ENCODE measurements at regions of chr9 and their contacts with region 1.

Region 1: GRCh38 chr9:127074561-127075548 is 47.6 kb downstream of the ANGPTL2 start:
- DNase-seq: peak in 1 of 2 experiments; percentile 17
- H3K4me3 ChIP-seq: no peak overlapping the region
- H3K4me3 Mint-ChIP-seq: no peak overlapping the region
- H3K27ac Mint-ChIP-seq: peak overlapping the region; percentile 73
- H3K4me1 ChIP-seq: peaks cover 51% of the 10 kb centered on the region
- H3K4me1 Mint-ChIP-seq: peaks cover 42% of the 10 kb centered on the region
- H3K27me3 ChIP-seq: no peaks in the 10 kb centered on the region
- H3K27me3 Mint-ChIP-seq: no peaks in the 10 kb centered on the region
- CTCF ChIP-seq: no peak

Region 2: GRCh38 chr9:127112056-127112455 is 37.2 kb after region 1 on chr9:
- CTCF ChIA-PET with region 1: no interaction called
- POLR2A ChIA-PET with region 1: no interaction called
- intact Hi-C with region 1: no loop called
- DNase-seq: no peak
- H3K4me3 ChIP-seq: no peak overlapping the region
- H3K4me3 Mint-ChIP-seq: no peak overlapping the region
- H3K27ac Mint-ChIP-seq: no peak overlapping the region
- H3K4me1 ChIP-seq: peaks cover 8% of the 10 kb centered on the region
- H3K4me1 Mint-ChIP-seq: peaks cover 17% of the 10 kb centered on the region
- H3K27me3 ChIP-seq: no peaks in the 10 kb centered on the region
- H3K27me3 Mint-ChIP-seq: no peaks in the 10 kb centered on the region
- CTCF ChIP-seq: no peak

Region 3: GRCh38 chr9:127128341-127129072 is 53.7 kb after region 1 on chr9:
- CTCF ChIA-PET with region 1: no interaction called
- POLR2A ChIA-PET with region 1: no interaction called
- intact Hi-C with region 1: loop called (anchors 5 kb)
- DNase-seq: no peak
- H3K4me3 ChIP-seq: no peak overlapping the region
- H3K4me3 Mint-ChIP-seq: no peak overlapping the region
- H3K27ac Mint-ChIP-seq: peak overlapping the region; percentile 33
- H3K4me1 ChIP-seq: peaks cover 47% of the 10 kb centered on the region
- H3K4me1 Mint-ChIP-seq: peaks cover 29% of the 10 kb centered on the region
- H3K27me3 ChIP-seq: no peaks in the 10 kb centered on the region
- H3K27me3 Mint-ChIP-seq: no peaks in the 10 kb centered on the region
- CTCF ChIP-seq: no peak

Region 4: DNA sequence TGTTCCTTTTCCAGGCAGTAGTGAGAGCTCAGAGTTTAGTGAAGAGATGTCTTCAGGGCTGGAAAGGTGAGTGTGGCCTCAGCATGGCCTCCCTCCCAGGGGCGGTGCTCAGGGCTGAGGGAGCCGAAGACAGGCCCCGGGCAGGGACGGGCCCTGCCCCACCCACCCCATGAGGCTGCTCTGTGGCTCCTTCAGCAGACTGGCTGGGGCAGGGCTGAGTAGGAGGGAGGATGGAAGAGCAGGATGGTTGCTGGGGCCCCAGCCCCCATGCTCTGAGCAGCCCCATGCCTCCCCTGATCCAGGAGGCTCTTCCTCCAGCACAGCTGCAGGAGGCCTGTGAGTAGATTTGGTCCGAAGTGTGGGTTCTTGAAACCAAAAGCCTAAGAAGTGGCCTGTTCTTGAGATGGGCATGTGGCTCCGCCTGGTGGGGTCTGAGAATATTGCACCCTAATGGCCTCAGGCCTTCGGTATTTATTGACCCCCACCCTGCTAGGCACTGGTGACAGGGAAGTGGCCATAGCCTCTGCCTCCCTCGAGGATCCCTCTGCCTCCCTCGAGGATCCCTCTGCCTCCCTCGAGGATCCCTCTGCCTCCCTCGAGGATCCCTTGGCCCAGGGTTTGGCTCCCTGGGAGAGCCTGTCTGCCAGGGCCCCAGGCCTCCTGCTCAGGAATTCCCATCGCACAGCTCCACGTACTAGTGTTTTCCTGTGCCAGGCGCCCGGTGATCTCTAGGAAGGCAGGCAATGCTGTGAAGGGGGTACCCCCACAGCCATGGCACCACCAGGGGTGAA is 124.3 kb after region 1 on chr9:
- CTCF ChIA-PET with region 1: no interaction called
- POLR2A ChIA-PET with region 1: no interaction called
- intact Hi-C with region 1: loop called (anchors 5 kb)
- DNase-seq: peak; percentile 78 to 84
- H3K4me3 ChIP-seq: no peak overlapping the region
- H3K4me3 Mint-ChIP-seq: no peak overlapping the region
- H3K27ac Mint-ChIP-seq: peak overlapping the region; percentile 61
- H3K4me1 ChIP-seq: peaks cover 6% of the 10 kb centered on the region; the same call in 1 of the 2 replicates
- H3K4me1 Mint-ChIP-seq: peaks cover 10% of the 10 kb centered on the region
- H3K27me3 ChIP-seq: no peaks in the 10 kb centered on the region
- H3K27me3 Mint-ChIP-seq: no peaks in the 10 kb centered on the region
- CTCF ChIP-seq: peak; percentile 78 to 93

Region 5: DNA sequence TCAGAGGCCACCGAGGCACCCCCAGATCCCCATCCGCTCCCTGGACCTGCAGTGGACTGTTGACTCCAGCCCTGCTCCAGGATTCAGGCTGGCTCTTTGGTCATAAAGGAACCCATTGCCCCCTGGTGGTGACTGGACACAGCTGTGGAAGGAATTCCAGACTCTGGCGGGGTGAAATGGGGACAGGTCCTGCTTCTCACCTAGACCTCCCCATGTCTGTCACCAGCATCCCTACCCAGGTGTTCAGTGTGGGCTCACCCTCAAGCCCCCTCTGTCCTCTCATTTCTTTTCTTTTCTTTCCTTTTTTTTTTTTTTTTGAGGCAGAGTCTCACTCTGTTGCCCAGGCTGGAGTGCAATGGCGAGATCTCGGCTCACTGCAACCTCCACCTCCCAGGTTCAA is 511.7 kb after region 1 on chr9:
- CTCF ChIA-PET with region 1: no interaction called
- POLR2A ChIA-PET with region 1: no interaction called
- intact Hi-C with region 1: no loop called
- DNase-seq: peak; percentile 86 to 87
- H3K4me3 ChIP-seq: no peak overlapping the region
- H3K4me3 Mint-ChIP-seq: no peak overlapping the region
- H3K27ac Mint-ChIP-seq: no peak overlapping the region
- H3K4me1 ChIP-seq: peaks cover 5% of the 10 kb centered on the region
- H3K4me1 Mint-ChIP-seq: no peaks in the 10 kb centered on the region
- H3K27me3 ChIP-seq: no peaks in the 10 kb centered on the region; the same call in 1 of the 2 replicates
- H3K27me3 Mint-ChIP-seq: no peaks in the 10 kb centered on the region
- CTCF ChIP-seq: peak; percentile 83 to 93

Measured in Caco-2 (cell line).